Posterior vena cava (tissue), 2 donors: ENCODE measurements at regions of chr17 and their contacts with region 1.

Region 1: GRCh38 chr17:32931686-32932085 is 3.7 kb downstream of the TMEM98 start:
- DNase-seq: no peak

Region 2: GRCh38 chr17:34485999-34486398 is 1554.3 kb after region 1 on chr17:
- intact Hi-C with region 1: loop called in 1 of 2 experiments (anchors 5 kb)
- DNase-seq: no peak